CD8-positive, alpha-beta memory T cell (primary cell): ENCODE measurements at regions of chr20 and their contacts with region 1.

Region 1: GRCh38 chr20:35601008-35601973 is 14.3 kb upstream of the SPAG4 start:
- DNase-seq: peak; percentile 64 to 86 (median 71)
- H3K4me3 ChIP-seq: peak overlapping the region; percentile 74
- H3K4me3 Mint-ChIP-seq: peak overlapping the region; percentile 64 to 90 (median 81)
- H3K27ac ChIP-seq: no peak overlapping the region
- H3K27ac Mint-ChIP-seq: peak overlapping the region in 6 of 8 donors; percentile 7 to 88 (median 38)
- H3K4me1 ChIP-seq: peaks cover 9% of the 10 kb centered on the region
- H3K4me1 Mint-ChIP-seq: peaks cover 5 to 15% (median 10%) of the 10 kb centered on the region in 3 donors
- H3K27me3 ChIP-seq: peaks cover 12% of the 10 kb centered on the region
- H3K27me3 Mint-ChIP-seq: peaks cover 16 to 23% of the 10 kb centered on the region in 2 donors

Region 2: GRCh38 chr20:35432430-35432735 is 168.9 kb before region 1 on chr20:
- CTCF ChIA-PET with region 1: no interaction called
- POLR2A ChIA-PET with region 1: no interaction called
- DNase-seq: no peak
- H3K4me3 ChIP-seq: no peak overlapping the region
- H3K4me3 Mint-ChIP-seq: peak overlapping the region in 1 of 7 donors; percentile 3
- H3K27ac ChIP-seq: no peak overlapping the region
- H3K27ac Mint-ChIP-seq: peak overlapping the region in 4 of 8 donors; percentile 22 to 73 (median 70)
- H3K4me1 ChIP-seq: no peaks in the 10 kb centered on the region
- H3K4me1 Mint-ChIP-seq: peaks cover 0 to 8% (median 6%) of the 10 kb centered on the region in 3 donors
- H3K27me3 ChIP-seq: no peaks in the 10 kb centered on the region
- H3K27me3 Mint-ChIP-seq: no peaks in the 10 kb centered on the region

Region 3: GRCh38 chr20:35699127-35699975 is 98.1 kb after region 1 on chr20 and contains the starts of genes NFS1 and ROMO1:
- CTCF ChIA-PET with region 1: interaction called, 10 read pairs
- POLR2A ChIA-PET with region 1: interaction called, 3 read pairs
- DNase-seq: peak; percentile 81 to 92 (median 82)
- H3K4me3 ChIP-seq: peak within 1 kb of the TSS; percentile 93
- H3K4me3 Mint-ChIP-seq: peak within 1 kb of the TSS; percentile 87 to 96 (median 94)
- H3K27ac ChIP-seq: peak within 1 kb of the TSS; percentile 94
- H3K27ac Mint-ChIP-seq: peak within 1 kb of the TSS; percentile 92 to 98 (median 97)
- H3K4me1 ChIP-seq: peaks cover 21% of the 10 kb centered on the region
- H3K4me1 Mint-ChIP-seq: peaks cover 34 to 59% (median 58%) of the 10 kb centered on the region in 3 donors
- H3K27me3 ChIP-seq: no peaks in the 10 kb centered on the region
- H3K27me3 Mint-ChIP-seq: peaks cover 0 to 2% of the 10 kb centered on the region in 2 donors
- total RNA-seq, gene NFS1: 36.4 to 37.7 TPM
- total RNA-seq, gene ROMO1: 108 to 117 TPM